IMR-90 (cell line): ENCODE measurements at regions of chr5 and their contacts with region 1.

Region 1: DNA sequence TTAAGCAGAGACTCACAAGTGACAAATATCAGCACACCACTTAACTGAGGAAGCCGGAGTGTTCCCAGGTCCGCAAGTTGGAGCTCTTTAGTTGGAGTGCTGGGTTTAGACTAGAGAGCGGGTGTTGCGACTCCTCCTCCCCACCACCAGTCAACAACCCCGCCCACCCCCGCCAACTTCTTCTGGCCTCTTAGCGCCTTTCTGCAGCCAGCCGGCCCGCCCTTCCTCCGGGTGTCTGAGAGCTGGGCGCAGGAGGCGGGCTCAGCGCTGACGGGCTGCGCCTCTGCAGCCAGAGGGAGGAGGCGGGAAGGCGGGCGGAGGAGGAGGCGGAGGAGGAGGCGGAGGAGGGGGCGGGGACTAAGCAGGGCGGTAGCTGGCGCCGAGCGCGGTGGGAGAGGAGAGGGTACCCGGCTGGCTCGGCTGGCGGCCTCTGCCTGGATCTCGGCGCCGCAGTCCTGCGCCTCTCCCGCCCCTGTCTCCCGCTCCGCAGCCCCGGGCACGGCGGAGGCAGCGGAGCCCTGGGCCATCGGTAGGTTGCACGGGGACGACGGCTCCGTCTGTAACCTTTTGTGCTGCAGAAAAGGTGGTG is at the start of gene MACIR:
- DNase-seq: peak; percentile 95
- ATAC-seq: peak; percentile 97
- H3K4me3 ChIP-seq: peak within 1 kb of the TSS; percentile 98
- H3K27ac ChIP-seq: peak within 1 kb of the TSS; percentile 78
- H3K4me1 ChIP-seq: peaks cover 2% of the 10 kb centered on the region
- H3K27me3 ChIP-seq: no peaks in the 10 kb centered on the region; the same call in 1 of the 2 replicates
- CTCF ChIP-seq: no peak
- POLR2A ChIP-seq: peak; percentile 36; the same call in 1 of the 2 replicates
- RAD21 ChIP-seq: no peak
- total RNA-seq, gene MACIR: 21.3 and 22.2 TPM in 2 replicates

Region 2: DNA sequence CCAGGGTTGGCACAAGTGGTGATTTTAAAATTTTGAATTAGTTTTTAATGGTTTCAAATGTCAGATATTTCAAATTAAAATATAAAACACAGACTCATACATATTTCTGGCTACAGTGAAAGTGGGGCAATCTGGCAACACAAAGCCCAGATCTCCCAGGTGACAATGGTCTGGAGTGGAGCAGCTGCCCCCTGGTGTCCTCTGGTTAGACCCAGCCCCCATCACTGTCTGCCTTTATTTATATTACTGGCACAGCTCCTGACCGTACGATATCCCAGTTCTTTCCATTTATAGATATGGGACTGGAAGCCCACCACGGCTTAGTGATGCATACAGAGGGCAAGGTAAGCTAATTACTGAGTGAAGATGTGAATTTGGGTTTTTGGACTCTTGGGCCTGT is 37.4 kb after region 1 on chr5:
- CTCF ChIA-PET with region 1: interaction called, 3 read pairs
- POLR2A ChIA-PET with region 1: no interaction called
- dilution Hi-C with region 1: no loop called
- in situ Hi-C with region 1: no loop called
- intact Hi-C with region 1: loop called (anchors 2 kb)
- DNase-seq: no peak
- ATAC-seq: no peak
- H3K4me3 ChIP-seq: no peak overlapping the region
- H3K27ac ChIP-seq: no peak overlapping the region
- H3K4me1 ChIP-seq: peaks cover 1% of the 10 kb centered on the region; the same call in 1 of the 2 replicates
- H3K27me3 ChIP-seq: no peaks in the 10 kb centered on the region
- CTCF ChIP-seq: no peak
- POLR2A ChIP-seq: no peak
- RAD21 ChIP-seq: no peak

Region 3: DNA sequence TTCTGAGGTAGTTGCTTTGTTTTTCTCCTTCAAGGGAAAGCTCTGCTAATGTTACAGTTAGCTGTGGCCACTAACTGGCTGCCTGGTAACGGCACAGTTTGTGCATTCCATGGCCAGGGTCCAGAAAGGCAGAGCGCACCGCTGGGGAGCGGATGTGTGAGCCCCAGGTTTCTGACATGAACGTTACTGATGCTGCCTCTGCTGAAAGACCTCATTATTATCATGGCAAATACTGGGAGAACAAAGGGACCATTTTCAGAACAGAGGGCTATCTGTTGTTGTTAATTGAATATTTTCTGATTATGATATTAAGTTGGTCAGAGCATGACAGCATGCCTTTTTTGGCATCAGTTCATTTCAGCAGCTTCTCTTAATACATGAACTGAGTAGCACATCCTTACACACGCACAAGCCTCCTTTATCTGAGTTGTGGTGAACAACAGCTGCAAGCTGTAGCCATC is 170.0 kb after region 1 on chr5:
- CTCF ChIA-PET with region 1: interaction called, 3 read pairs
- POLR2A ChIA-PET with region 1: interaction called, 3 read pairs
- dilution Hi-C with region 1: no loop called
- in situ Hi-C with region 1: no loop called
- intact Hi-C with region 1: loop called (anchors 5 kb)
- DNase-seq: peak; percentile 86
- ATAC-seq: peak; percentile 54
- H3K4me3 ChIP-seq: no peak overlapping the region
- H3K27ac ChIP-seq: no peak overlapping the region
- H3K4me1 ChIP-seq: peaks cover 12% of the 10 kb centered on the region
- H3K27me3 ChIP-seq: no peaks in the 10 kb centered on the region
- CTCF ChIP-seq: no peak
- POLR2A ChIP-seq: no peak
- RAD21 ChIP-seq: no peak

Region 4: GRCh38 chr5:103450333-103451061 is 192.0 kb after region 1 on chr5:
- CTCF ChIA-PET with region 1: no interaction called
- POLR2A ChIA-PET with region 1: no interaction called
- dilution Hi-C with region 1: no loop called
- in situ Hi-C with region 1: no loop called
- intact Hi-C with region 1: loop called (anchors 5 kb)
- DNase-seq: peak; percentile 88
- ATAC-seq: peak; percentile 95
- H3K4me3 ChIP-seq: no peak overlapping the region
- H3K27ac ChIP-seq: peak overlapping the region; percentile 60
- H3K4me1 ChIP-seq: peaks cover 10% of the 10 kb centered on the region
- H3K27me3 ChIP-seq: no peaks in the 10 kb centered on the region
- CTCF ChIP-seq: no peak
- POLR2A ChIP-seq: no peak
- RAD21 ChIP-seq: no peak